Activated naive CD4-positive, alpha-beta T cell treated with anti-CD3 and anti-CD28 coated beads for 36 hours (primary cell): ENCODE measurements at regions of chr13 and their contacts with region 1.

Region 1: GRCh38 chr13:110944121-110944967 is 29.5 kb upstream of the ANKRD10 start:
- DNase-seq: peak; percentile 53
- H3K4me3 Mint-ChIP-seq: no peak overlapping the region
- H3K27ac Mint-ChIP-seq: no peak overlapping the region
- H3K4me1 Mint-ChIP-seq: peaks cover 21% of the 10 kb centered on the region
- H3K27me3 Mint-ChIP-seq: no peaks in the 10 kb centered on the region

Region 2: GRCh38 chr13:110965038-110965754 is 20.9 kb after region 1 on chr13:
- CTCF ChIA-PET with region 1: no interaction called
- intact Hi-C with region 1: loop called (anchors 1 kb)
- DNase-seq: peak; percentile 56
- H3K4me3 Mint-ChIP-seq: no peak overlapping the region
- H3K27ac Mint-ChIP-seq: peak overlapping the region; percentile 75
- H3K4me1 Mint-ChIP-seq: peaks cover 16% of the 10 kb centered on the region
- H3K27me3 Mint-ChIP-seq: peaks cover 26% of the 10 kb centered on the region

Region 3: GRCh38 chr13:110976785-110977184 is 32.4 kb after region 1 on chr13:
- CTCF ChIA-PET with region 1: no interaction called
- intact Hi-C with region 1: no loop called
- DNase-seq: no peak
- H3K4me3 Mint-ChIP-seq: no peak overlapping the region
- H3K27ac Mint-ChIP-seq: no peak overlapping the region
- H3K4me1 Mint-ChIP-seq: peaks cover 4% of the 10 kb centered on the region
- H3K27me3 Mint-ChIP-seq: peaks cover 17% of the 10 kb centered on the region

Region 4: GRCh38 chr13:111049802-111050538 is 105.6 kb after region 1 on chr13:
- CTCF ChIA-PET with region 1: no interaction called
- intact Hi-C with region 1: loop called (anchors 1 kb)
- DNase-seq: peak; percentile 21
- H3K4me3 Mint-ChIP-seq: no peak overlapping the region
- H3K27ac Mint-ChIP-seq: no peak overlapping the region
- H3K4me1 Mint-ChIP-seq: no peaks in the 10 kb centered on the region
- H3K27me3 Mint-ChIP-seq: peaks cover 7% of the 10 kb centered on the region